WTC11 (cell line): ENCODE measurements at regions of chr1 and their contacts with region 1.

Region 1: DNA sequence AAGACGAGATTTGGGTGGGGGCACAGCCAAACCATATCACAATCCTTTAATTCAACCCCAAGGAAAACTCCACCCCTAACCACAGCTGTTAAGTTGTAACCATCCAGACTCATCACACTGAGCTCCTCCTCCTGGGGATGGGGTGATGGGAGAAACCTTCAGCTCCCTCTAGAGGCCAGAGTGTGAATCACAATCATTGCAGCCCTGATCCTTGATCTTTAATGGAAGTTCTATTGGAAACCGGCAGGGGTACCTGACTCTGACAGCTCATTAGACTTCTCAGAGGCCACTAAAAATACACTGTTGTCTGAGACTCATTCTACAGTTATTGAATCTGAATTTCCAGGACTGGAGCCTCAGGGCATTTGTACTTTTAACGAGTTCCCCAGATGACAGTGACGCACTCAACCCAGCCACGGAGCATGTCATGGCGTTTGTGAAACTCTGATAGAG is 127.2 kb downstream of the IGSF21 start:
- DNase-seq: peak; percentile 77
- ATAC-seq: peak; percentile 82
- H3K4me3 Mint-ChIP-seq: no peak overlapping the region
- H3K27ac Mint-ChIP-seq: peak overlapping the region; percentile 86
- H3K4me1 Mint-ChIP-seq: peaks cover 78% of the 10 kb centered on the region
- H3K27me3 Mint-ChIP-seq: no peaks in the 10 kb centered on the region; the same call in 1 of the 2 replicates
- CTCF ChIP-seq: peak; percentile 73; the same call in 1 of the 2 replicates

Region 2: DNA sequence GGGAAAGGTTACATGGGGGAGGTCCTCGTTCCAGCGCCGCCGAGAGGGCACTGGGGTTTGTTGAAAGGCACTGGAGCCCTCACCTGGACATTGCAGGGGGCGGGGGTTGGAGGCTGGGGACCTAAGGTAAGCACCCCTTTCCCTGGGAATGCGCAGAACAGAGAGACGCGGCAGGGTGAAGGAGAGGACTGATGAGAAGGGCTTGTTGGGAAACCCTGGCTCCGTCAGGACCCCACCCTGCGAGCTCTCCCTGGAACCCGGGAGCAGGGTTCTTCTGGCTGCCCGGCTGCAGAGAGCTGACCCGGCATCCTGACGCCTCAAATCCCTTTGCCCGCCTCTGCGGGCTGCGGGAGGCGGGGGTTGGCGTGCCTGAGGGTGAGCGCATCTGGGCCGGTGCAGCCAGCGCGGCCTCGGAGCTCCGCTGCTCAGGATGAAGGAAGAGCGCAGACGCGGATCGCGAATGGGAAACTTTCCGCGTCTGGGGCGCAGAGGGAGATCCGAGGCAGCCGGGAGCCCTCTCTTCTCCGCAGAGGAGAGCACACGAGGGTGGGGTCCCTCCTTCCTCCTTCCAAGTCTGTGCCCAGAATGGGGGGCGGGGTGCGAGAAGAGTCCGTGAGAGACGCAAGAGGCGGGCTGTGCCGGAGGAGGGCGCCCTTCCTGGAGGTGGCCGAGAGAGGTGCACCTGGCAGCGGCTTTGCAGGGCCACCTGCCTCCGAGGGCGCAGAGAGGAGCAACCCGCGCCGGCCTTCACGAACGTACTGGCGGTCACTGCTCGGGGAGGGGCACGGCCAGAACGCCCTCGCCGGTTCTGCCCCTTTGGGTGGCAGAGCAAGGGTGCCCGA is 124.8 kb before region 1 on chr1:
- CTCF ChIA-PET with region 1: interaction called, 16 read pairs
- POLR2A ChIA-PET with region 1: no interaction called
- DNase-seq: peak; percentile 94
- ATAC-seq: peak; percentile 59
- H3K4me3 Mint-ChIP-seq: peak overlapping the region; percentile 86
- H3K27ac Mint-ChIP-seq: no peak overlapping the region
- H3K4me1 Mint-ChIP-seq: peaks cover 45% of the 10 kb centered on the region
- H3K27me3 Mint-ChIP-seq: peaks cover 59% of the 10 kb centered on the region
- CTCF ChIP-seq: peak; percentile 47; the same call in 1 of the 2 replicates

Region 3: GRCh38 chr1:18199462-18199861 is 35.4 kb before region 1 on chr1:
- CTCF ChIA-PET with region 1: interaction called, 11 read pairs
- POLR2A ChIA-PET with region 1: no interaction called
- DNase-seq: peak; percentile 34
- ATAC-seq: peak; percentile 53
- H3K4me3 Mint-ChIP-seq: no peak overlapping the region
- H3K27ac Mint-ChIP-seq: no peak overlapping the region; the same call in 1 of the 2 replicates
- H3K4me1 Mint-ChIP-seq: peaks cover 30% of the 10 kb centered on the region
- H3K27me3 Mint-ChIP-seq: no peaks in the 10 kb centered on the region; the same call in 1 of the 2 replicates
- CTCF ChIP-seq: no peak

Region 4: GRCh38 chr1:18217398-18218043 is 17.3 kb before region 1 on chr1:
- CTCF ChIA-PET with region 1: interaction called, 26 read pairs
- POLR2A ChIA-PET with region 1: no interaction called
- DNase-seq: peak; percentile 65
- ATAC-seq: peak; percentile 83
- H3K4me3 Mint-ChIP-seq: no peak overlapping the region
- H3K27ac Mint-ChIP-seq: no peak overlapping the region
- H3K4me1 Mint-ChIP-seq: peaks cover 10% of the 10 kb centered on the region
- H3K27me3 Mint-ChIP-seq: peaks cover 3% of the 10 kb centered on the region; the same call in 1 of the 2 replicates
- CTCF ChIP-seq: no peak; the same call in 1 of the 2 replicates

Region 5: DNA sequence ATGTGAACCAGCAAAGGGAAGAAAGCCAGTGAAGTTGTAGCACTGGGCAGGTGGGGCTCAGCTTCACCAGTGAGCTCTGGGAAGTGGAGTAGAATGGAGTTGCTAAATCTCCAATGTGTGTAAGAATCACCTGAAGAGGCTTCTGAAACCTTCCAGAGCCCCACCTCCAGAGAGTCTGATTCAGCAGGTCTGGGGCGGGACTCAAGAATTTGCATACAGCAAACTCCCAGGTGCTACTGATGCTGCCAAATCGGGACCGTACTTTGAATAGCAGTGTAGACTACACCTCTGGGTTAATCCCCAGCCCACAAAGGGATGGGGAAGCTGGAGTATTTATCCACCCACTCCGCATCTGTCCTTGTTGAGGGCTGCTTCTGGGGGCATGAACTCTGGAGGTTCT is 27.1 kb after region 1 on chr1:
- CTCF ChIA-PET with region 1: interaction called, 21 read pairs
- POLR2A ChIA-PET with region 1: no interaction called
- DNase-seq: peak; percentile 26
- ATAC-seq: peak; percentile 69
- H3K4me3 Mint-ChIP-seq: no peak overlapping the region
- H3K27ac Mint-ChIP-seq: peak overlapping the region; percentile 62; the same call in 1 of the 2 replicates
- H3K4me1 Mint-ChIP-seq: peaks cover 42% of the 10 kb centered on the region
- H3K27me3 Mint-ChIP-seq: no peaks in the 10 kb centered on the region; the same call in 1 of the 2 replicates
- CTCF ChIP-seq: no peak

Region 6: DNA sequence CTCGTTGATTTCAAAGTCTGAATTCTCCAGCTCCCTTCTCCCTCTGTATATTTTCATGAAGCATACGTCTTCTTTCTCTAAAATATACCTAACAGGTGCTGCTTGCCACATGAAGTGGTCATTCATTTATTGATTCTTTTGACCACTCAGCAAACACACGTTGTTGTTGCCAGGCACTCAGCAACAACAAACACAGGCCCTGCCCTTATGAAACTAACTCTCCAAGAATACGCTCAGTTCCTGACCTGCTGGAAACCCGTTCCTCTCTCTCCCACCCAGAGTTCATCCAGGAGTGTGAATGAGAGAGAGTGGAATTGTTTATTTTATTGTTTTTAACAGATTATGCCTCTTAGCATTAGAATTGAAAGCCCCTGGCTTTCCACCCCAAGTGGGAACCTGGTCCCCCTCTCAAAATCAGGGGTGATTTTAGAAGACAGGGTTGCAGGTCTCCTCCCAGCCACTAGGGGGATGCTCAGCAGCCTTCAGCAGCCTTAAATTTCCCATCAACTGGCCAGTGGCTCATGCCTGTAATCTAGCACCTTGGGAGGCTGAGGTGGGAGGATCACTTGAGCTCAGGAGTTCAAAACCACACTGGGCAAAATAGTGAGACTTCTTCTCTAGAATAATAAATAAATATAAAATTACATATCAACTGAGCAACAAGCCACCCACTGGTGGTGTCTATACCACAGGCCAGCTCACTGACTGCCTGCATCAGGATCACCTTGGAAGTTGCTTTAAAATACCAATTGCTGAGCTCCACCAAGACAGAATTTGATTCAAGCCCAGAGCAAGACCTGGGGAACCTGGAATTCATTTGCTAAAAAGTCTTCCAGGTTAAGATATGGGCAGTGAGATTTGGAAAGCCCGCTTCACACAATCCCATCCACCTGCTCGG is 64.9 kb after region 1 on chr1:
- CTCF ChIA-PET with region 1: interaction called, 75 read pairs
- POLR2A ChIA-PET with region 1: interaction called, 3 read pairs
- DNase-seq: peak; percentile 52
- ATAC-seq: peak; percentile 4; the same call in 1 of the 2 replicates
- H3K4me3 Mint-ChIP-seq: no peak overlapping the region; the same call in 1 of the 2 replicates
- H3K27ac Mint-ChIP-seq: peak overlapping the region; percentile 95
- H3K4me1 Mint-ChIP-seq: peaks cover 53% of the 10 kb centered on the region
- H3K27me3 Mint-ChIP-seq: no peaks in the 10 kb centered on the region
- CTCF ChIP-seq: peak; percentile 92